HepG2 (cell line): ENCODE measurements at regions of chr14 and their contacts with region 1.

Region 1: GRCh38 chr14:20613094-20614037 is 22.2 kb upstream of the RNASE12 start:
- DNase-seq: peak; percentile 99
- ATAC-seq: peak; percentile 84
- H3K4me3 ChIP-seq: peak overlapping the region; percentile 70 to 83 (median 77)
- H3K27ac ChIP-seq: peak overlapping the region; percentile 73
- H3K4me1 ChIP-seq: peaks cover 77% of the 10 kb centered on the region
- H3K27me3 ChIP-seq: no peaks in the 10 kb centered on the region; a peak in 1 of 5 replicates
- CTCF ChIP-seq: peak; percentile 92
- EP300 ChIP-seq: peak in 1 of 2 experiments; percentile 30; a peak in 1 of 4 replicates
- POLR2A ChIP-seq: no peak
- RAD21 ChIP-seq: peak; percentile 19; the same call in 1 of the 2 replicates

Region 2: GRCh38 chr14:20332788-20333493 is 280.4 kb before region 1 on chr14 and contains the start of gene CCNB1IP1:
- CTCF ChIA-PET with region 1: interaction called, 26 read pairs
- POLR2A ChIA-PET with region 1: interaction called, 5 read pairs
- in situ Hi-C with region 1: loop called (anchors 5 kb)
- intact Hi-C with region 1: loop called (anchors 2 kb)
- DNase-seq: peak; percentile 94
- ATAC-seq: peak; percentile 96
- H3K4me3 ChIP-seq: peak within 1 kb of the TSS; percentile 59 to 78 (median 75)
- H3K27ac ChIP-seq: peak within 1 kb of the TSS; percentile 79
- H3K4me1 ChIP-seq: peaks cover 57% of the 10 kb centered on the region
- H3K27me3 ChIP-seq: no peaks in the 10 kb centered on the region; a peak in 1 of 5 replicates
- CTCF ChIP-seq: no peak
- EP300 ChIP-seq: no peak
- POLR2A ChIP-seq: peak; percentile 78 to 94
- RAD21 ChIP-seq: no peak
- total RNA-seq, gene CCNB1IP1: 98.3 and 110 TPM in 2 replicates

Region 3: GRCh38 chr14:20454516-20455354 is 158.6 kb before region 1 on chr14 and contains the starts of genes APEX1 and OSGEP:
- CTCF ChIA-PET with region 1: no interaction called
- POLR2A ChIA-PET with region 1: interaction called, 8 read pairs
- in situ Hi-C with region 1: loop called (anchors 25 kb)
- intact Hi-C with region 1: loop called (anchors 1 kb)
- DNase-seq: peak; percentile 99
- ATAC-seq: peak; percentile 90
- H3K4me3 ChIP-seq: peak within 1 kb of the TSS; percentile 88 to 92 (median 89)
- H3K27ac ChIP-seq: peak within 1 kb of the TSS; percentile 94
- H3K4me1 ChIP-seq: peaks cover 35% of the 10 kb centered on the region
- H3K27me3 ChIP-seq: no peaks in the 10 kb centered on the region; a peak in 1 of 5 replicates
- CTCF ChIP-seq: 0 out of 2 replicates have a peak, but pooled peaks have one; percentile 13
- EP300 ChIP-seq: peak in 1 of 2 experiments; percentile 7; a peak in 2 of 4 replicates
- POLR2A ChIP-seq: peak; percentile 86 to 93
- RAD21 ChIP-seq: peak; percentile 63; the same call in 1 of the 2 replicates
- total RNA-seq, gene APEX1: 171 and 261 TPM in 2 replicates
- total RNA-seq, gene OSGEP: 32.4 and 39.7 TPM in 2 replicates

Region 4: GRCh38 chr14:20632682-20633428 is 19.5 kb after region 1 on chr14:
- CTCF ChIA-PET with region 1: interaction called, 7 read pairs
- POLR2A ChIA-PET with region 1: interaction called, 19 read pairs
- in situ Hi-C with region 1: no loop called
- intact Hi-C with region 1: loop called (anchors 1 kb)
- DNase-seq: peak; percentile 93
- ATAC-seq: peak; percentile 79
- H3K4me3 ChIP-seq: peak overlapping the region; percentile 69 to 78 (median 77)
- H3K27ac ChIP-seq: peak overlapping the region; percentile 16
- H3K4me1 ChIP-seq: peaks cover 34% of the 10 kb centered on the region
- H3K27me3 ChIP-seq: no peaks in the 10 kb centered on the region; a peak in 1 of 5 replicates
- CTCF ChIP-seq: no peak
- EP300 ChIP-seq: 0 out of 4 replicates have a peak, but pooled peaks of 1 of the 2 experiments have one; percentile 9
- POLR2A ChIP-seq: no peak
- RAD21 ChIP-seq: no peak

Region 5: DNA sequence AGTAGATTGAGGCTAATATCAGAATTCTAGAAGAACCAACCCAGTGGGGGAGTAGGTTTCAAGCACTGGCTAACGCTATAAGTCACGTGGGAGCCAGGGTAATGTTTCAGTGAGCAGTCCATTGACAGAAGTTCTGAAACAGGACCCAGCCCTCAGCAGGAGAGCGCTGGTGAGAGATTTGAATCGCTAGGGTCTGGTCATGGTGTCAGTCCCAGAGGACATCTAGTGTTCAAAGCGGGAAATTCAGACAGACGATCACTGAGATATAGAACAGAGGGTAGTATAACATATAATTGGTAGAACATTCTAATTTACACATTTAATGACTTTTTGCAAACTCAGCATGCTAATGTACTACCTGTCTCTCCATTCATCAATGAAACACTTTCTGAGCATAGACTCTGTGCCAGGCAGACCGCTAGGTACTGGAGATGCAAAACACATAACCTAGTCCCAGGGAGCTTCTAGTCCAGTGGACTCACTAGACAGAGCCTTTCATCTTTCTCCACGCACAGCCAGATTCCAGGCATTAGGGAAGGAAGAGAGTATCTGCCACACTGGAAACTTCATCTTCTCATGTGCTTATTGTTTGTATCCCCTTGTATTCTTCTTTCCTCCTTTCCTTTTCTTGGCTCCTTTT is 242.4 kb after region 1 on chr14:
- CTCF ChIA-PET with region 1: interaction called, 7 read pairs
- POLR2A ChIA-PET with region 1: no interaction called
- in situ Hi-C with region 1: no loop called
- intact Hi-C with region 1: loop called (anchors 5 kb)
- DNase-seq: peak; percentile 79
- ATAC-seq: peak; percentile 98
- H3K4me3 ChIP-seq: no peak overlapping the region
- H3K27ac ChIP-seq: no peak overlapping the region
- H3K4me1 ChIP-seq: peaks cover 9% of the 10 kb centered on the region
- H3K27me3 ChIP-seq: 0 out of 5 replicates have a peak, but pooled peaks cover 0 to 6% of the 10 kb centered on the region in 2 experiments
- CTCF ChIP-seq: peak; percentile 86
- EP300 ChIP-seq: no peak
- POLR2A ChIP-seq: no peak
- RAD21 ChIP-seq: peak; percentile 62